Left colon (tissue), 2 donors: ENCODE measurements at regions of chr3 and their contacts with region 1.

Region 1: DNA sequence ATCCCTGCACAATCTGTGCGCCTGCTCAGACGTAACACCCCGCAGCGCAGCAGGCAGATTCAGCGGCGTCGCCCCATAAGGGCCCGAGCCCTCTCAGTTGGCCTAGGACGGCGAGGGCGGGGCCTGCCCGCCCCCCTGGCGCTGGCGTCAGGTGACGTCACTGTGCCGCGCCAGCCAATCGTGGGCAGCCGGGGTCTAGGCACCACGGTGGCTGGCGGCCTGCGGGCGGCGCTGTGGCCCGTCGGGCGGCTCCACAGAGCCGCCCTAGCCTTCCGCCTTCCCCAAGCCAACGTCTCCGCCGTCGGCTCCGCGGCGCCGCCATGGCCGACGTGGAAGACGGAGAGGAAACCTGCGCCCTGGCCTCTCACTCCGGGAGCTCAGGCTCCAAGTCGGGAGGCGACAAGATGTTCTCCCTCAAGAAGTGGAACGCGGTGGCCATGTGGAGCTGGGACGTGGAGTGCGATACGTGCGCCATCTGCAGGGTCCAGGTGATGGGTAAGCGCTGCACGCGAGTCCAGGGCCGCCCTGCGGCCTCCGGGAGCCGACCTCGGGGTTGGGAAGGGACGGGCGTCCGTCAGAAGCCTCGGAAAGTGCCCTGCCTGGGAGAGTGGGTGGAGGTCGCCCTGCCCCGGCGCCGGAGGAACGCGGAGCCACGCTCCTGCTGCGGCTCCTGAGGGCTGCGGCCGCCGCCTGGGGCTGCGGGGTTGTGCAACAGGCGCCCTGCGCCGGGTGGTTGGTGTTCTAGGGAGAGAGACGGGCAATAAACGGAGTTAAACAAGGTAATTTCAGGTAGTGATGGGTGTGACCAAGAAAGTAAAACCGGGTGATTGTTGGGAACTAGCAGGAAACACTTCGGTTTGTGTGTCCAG is at the start of gene RNF7:
- DNase-seq: peak; percentile 95 to 96
- ATAC-seq: peak; percentile 80
- total RNA-seq, gene RNF7: 114 to 125 TPM

Region 2: GRCh38 chr3:141460097-141460704 is 278.1 kb before region 1 on chr3:
- intact Hi-C with region 1: loop called in 1 of 2 experiments (anchors 10 kb)
- DNase-seq: peak; percentile 82 to 95
- ATAC-seq: peak; percentile 88

Region 3: DNA sequence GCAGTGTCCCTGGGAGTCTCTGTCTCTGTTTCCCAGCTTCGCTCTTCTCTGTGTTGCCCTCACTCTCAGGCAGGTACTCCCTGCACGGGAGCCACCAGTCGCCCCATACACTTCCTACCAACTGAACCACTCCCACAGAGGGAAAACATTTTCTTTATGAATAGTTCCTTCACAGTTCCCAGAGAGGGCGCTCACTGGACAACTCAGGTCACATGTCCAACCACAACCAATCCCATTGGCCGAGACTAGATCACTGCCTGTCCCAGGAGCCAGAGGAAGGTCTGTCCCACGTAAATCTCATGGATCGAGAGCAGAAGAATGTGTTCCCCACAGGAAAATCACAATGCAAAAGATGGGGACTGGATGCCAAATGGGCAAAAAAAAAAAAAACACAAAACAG is 51.0 kb after region 1 on chr3:
- intact Hi-C with region 1: no loop called
- DNase-seq: no peak
- ATAC-seq: peak; percentile 45

Region 4: DNA sequence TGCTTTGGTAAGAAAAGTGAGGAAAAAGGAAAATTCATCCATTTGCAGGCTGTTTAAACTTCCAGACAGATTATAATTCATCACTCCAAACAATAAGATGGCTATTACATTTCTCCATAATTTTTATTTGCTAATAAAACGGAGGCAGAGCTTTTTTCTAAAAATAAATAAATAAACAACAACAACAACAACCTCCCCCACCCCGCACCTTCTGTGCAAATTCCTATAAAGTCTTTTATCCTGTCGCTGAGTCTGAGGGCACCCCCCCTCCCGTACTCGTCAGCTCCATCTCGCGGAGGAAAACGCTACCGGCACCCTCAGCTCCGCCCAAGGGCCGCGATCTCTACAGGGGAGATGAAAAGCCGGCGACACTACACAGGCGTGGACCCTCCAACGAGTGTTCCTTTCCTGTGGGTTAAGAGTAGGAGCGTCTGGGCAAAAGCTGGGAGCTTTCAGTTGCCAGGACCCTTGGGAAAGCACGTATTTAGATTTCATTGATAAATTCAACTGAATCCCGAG is 137.2 kb after region 1 on chr3:
- intact Hi-C with region 1: loop called in 1 of 2 experiments (anchors 5 kb)
- DNase-seq: peak; percentile 85 to 91
- ATAC-seq: peak; percentile 74

Region 5: DNA sequence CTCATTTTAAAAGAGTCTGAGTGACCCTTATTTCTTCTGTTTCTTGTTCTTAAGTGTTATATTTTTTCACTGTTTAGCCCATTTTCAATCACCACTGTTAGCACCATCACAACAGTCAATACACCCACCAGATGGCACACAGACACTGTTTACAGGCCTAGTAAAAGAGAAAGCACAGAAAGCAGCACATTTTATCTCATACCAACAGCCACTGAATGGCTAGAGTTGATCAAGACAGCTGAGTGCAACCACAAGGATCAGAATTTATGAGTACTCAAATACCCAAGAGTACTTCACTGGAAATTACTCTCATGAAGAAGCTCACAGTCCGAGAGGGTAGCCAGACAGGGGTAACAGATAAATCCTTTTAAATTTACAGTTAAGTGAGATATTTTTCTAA is 284.1 kb after region 1 on chr3:
- intact Hi-C with region 1: no loop called
- DNase-seq: no peak
- ATAC-seq: peak; percentile 71